ENCODE measurements at regions of chr1 and their contacts with region 1.

Region 1: DNA sequence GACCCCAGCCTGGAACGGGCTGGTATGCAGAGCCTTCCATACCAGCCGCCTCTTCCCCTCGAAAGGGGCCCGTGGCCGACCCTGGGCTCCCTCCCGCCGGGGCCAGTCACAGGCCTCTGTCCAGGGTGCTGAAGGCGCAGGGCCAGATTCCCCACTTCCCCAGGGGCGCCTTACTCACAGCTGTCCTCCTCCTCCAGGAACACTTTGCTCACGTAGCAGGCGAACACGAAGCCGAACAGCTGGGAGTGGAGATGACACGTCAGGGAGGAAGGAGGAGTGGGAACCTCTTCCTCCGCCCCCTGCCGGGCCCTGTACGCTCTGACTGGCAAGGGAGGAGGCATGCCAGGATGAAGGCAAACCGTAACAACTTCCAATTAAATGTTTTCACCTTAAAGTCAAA is 57.3 kb downstream of the NKAIN1 start:
- DNase-seq: peak; percentile 66
- H3K4me3 Mint-ChIP-seq: no peak overlapping the region
- H3K27ac Mint-ChIP-seq: no peak overlapping the region
- H3K4me1 Mint-ChIP-seq: peaks cover 13% of the 10 kb centered on the region
- H3K27me3 Mint-ChIP-seq: peaks cover 34% of the 10 kb centered on the region

Region 2: DNA sequence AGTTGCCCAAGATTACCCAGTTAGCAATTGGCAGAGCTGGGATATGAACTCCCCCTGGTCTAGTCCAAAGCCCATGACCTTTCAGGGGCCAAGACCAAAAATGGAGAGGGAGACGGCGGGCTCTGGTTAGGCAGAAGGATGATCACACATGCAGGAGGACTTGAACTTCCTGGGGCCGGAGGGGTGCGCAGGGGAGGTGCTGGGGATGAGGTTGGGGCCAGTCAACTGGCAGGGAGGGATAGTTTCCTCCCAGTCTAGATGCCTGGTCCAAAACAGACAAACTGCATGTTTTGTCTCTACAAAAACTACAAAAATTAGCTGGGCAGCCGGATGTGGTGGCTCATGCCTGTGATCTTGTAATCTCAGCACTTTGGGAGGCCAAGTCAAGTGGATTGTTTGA is 20.8 kb before region 1 on chr1:
- CTCF ChIA-PET with region 1: interaction called, 12 read pairs
- POLR2A ChIA-PET with region 1: no interaction called
- intact Hi-C with region 1: no loop called
- DNase-seq: no peak
- H3K4me3 Mint-ChIP-seq: no peak overlapping the region
- H3K27ac Mint-ChIP-seq: no peak overlapping the region
- H3K4me1 Mint-ChIP-seq: peaks cover 3% of the 10 kb centered on the region
- H3K27me3 Mint-ChIP-seq: peaks cover 5% of the 10 kb centered on the region

Region 3: DNA sequence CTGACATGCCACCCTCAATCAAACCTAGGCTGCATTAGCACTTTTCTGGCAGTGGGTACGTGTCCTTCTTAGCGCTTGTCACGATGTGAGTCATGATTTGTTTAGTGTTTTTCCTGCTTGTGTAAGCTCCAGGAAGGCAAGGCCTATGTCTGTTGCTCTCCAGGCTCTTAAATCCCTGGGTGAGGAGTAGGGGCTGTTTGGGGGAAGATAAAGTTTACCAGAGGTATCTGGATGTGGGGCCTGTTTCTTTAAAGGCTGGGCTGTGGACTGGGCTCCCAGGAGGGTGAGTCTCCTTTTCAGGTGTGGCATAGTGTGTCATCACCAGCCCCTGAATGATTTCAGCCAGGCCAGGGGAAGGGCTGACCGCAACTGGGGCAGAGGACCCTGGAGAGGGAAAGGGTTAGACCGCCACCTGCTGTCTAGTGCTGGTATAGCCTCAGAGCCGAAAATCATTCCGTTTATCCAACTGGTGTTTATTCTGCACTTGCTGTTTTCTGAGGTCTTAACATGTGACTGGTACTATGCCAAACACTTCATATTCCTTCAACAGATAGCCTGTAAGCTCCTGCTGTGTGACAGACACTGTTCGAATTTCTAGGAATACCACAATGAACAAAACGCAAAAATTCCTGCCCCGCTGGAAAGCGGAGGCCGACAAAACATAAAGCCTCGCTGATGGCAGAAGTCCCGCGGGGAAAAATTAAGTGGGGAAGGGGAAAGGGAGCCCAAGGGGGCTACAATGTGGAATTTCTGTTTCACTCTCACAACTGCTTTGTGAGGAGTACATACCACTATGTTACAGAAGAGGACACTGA is 240.4 kb after region 1 on chr1:
- CTCF ChIA-PET with region 1: interaction called, 8 read pairs
- POLR2A ChIA-PET with region 1: no interaction called
- intact Hi-C with region 1: loop called (anchors 1 kb)
- DNase-seq: peak; percentile 79
- H3K4me3 Mint-ChIP-seq: no peak overlapping the region
- H3K27ac Mint-ChIP-seq: no peak overlapping the region
- H3K4me1 Mint-ChIP-seq: no peaks in the 10 kb centered on the region
- H3K27me3 Mint-ChIP-seq: peaks cover 23% of the 10 kb centered on the region

Region 4: GRCh38 chr1:31789259-31790065 is 607.1 kb after region 1 on chr1:
- CTCF ChIA-PET with region 1: no interaction called
- POLR2A ChIA-PET with region 1: no interaction called
- intact Hi-C with region 1: no loop called
- DNase-seq: peak; percentile 98
- H3K4me3 Mint-ChIP-seq: peak overlapping the region; percentile 80
- H3K27ac Mint-ChIP-seq: no peak overlapping the region
- H3K4me1 Mint-ChIP-seq: peaks cover 13% of the 10 kb centered on the region
- H3K27me3 Mint-ChIP-seq: no peaks in the 10 kb centered on the region